ENCODE measurements at regions of chr10 and their contacts with region 1.

Region 1: DNA sequence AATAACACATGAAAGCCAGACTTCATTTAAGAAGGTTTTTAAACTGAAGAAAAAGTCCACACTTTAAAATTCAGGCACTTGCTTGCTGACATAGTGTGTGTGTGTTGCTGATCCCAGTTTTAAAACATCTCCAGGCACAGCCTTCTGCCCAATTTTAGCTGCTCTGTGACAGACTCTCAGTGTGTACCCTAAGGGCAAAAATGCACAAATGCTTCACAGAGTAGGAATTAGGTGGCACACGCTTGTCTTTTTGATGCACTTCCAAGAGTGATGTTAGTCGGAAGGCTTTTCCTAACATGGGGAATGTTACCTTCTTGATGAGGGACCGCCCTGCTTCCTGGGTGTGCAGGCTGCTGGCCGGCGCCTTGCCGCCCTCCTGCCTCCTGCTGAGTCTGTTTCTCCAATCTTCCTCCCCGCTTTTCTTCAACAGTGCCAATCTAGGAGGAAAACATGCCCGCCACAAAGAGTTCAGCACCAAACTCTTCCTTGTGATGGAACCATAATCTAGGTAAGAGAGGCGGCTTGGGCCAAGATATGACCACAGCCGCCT is 122.3 kb downstream of the SVIL start:
- DNase-seq: no peak
- H3K4me3 ChIP-seq: no peak overlapping the region
- H3K4me3 Mint-ChIP-seq: no peak overlapping the region
- H3K27ac ChIP-seq: no peak overlapping the region
- H3K27ac Mint-ChIP-seq: peak overlapping the region in 2 of 7 donors; percentile 28 to 40
- H3K4me1 ChIP-seq: no peaks in the 10 kb centered on the region
- H3K4me1 Mint-ChIP-seq: no peaks in the 10 kb centered on the region
- H3K27me3 ChIP-seq: no peaks in the 10 kb centered on the region
- H3K27me3 Mint-ChIP-seq: peaks cover 0 to 2% (median 0%) of the 10 kb centered on the region in 3 donors
- CTCF ChIP-seq: no peak

Region 2: GRCh38 chr10:29420744-29421143 is 91.8 kb before region 1 on chr10:
- intact Hi-C with region 1: no loop called
- DNase-seq: no peak
- H3K4me3 ChIP-seq: no peak overlapping the region
- H3K4me3 Mint-ChIP-seq: no peak overlapping the region
- H3K27ac ChIP-seq: no peak overlapping the region
- H3K27ac Mint-ChIP-seq: no peak overlapping the region
- H3K4me1 ChIP-seq: no peaks in the 10 kb centered on the region
- H3K4me1 Mint-ChIP-seq: no peaks in the 10 kb centered on the region
- H3K27me3 ChIP-seq: no peaks in the 10 kb centered on the region
- H3K27me3 Mint-ChIP-seq: no peaks in the 10 kb centered on the region
- CTCF ChIP-seq: no peak

Region 3: DNA sequence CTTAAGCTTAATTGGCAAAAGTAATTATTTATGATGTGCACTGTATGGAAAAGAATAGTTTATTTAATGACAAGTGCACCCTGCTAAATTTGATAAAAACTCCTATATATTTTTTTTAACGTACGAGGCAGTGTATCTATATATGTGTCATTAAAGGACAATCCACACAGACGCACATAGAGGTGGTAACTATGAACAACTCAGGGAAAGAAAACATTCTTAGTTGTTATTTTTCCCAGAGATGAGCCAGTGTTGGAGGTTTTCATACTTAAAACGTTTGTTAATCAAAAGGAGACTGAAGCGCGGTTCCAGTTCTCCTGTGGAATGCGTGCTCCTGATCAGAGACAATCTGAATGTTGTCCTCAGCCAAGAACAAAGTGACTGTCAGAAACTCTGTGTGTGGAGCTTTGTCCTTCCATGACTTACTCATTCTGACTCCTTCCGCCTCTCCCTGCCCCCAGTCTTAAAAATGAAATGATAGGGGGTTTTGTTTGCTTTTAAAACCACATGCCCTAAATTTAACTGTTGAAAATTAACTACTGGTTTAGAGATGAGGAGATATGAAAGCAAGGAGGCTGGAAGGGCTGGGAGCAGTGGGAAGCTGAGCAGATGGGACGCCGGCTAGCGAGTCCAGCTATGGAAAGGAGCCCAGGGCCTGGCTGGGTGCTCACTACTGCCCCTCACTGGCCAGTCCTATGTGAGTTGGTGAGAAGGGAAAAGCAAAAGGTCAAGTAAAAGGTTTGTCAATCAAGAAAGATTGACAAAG is 22.7 kb after region 1 on chr10:
- intact Hi-C with region 1: no loop called
- DNase-seq: no peak
- H3K4me3 ChIP-seq: no peak overlapping the region
- H3K4me3 Mint-ChIP-seq: no peak overlapping the region
- H3K27ac ChIP-seq: no peak overlapping the region
- H3K27ac Mint-ChIP-seq: peak overlapping the region in 2 of 7 donors; percentile 6 to 15
- H3K4me1 ChIP-seq: no peaks in the 10 kb centered on the region
- H3K4me1 Mint-ChIP-seq: peaks cover 9% of the 10 kb centered on the region
- H3K27me3 ChIP-seq: no peaks in the 10 kb centered on the region
- H3K27me3 Mint-ChIP-seq: no peaks in the 10 kb centered on the region
- CTCF ChIP-seq: peak; percentile 33

Region 4: DNA sequence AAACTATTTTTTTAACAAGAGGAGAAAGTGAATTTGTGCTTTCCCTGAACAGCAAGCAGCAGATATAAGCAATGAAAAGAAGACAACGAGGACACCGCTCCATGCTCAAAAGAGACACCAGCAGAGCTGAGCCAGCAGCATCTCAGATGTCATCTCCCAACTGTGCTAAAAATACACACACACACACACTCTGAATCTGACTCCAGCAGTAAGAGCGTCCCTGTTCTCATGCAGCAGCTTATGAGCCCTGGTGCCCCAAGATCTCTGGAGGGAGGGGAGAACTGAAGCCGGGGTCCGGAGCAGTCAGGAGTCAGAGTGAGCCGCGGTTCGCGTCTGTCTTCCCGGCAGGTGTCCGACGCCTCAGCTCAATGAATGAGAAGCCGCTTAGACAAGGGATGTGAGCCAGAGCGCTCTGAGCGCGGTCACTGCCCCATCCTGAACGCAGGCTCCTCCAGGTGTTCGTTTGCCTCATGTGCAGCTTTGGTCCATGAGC is 73.0 kb after region 1 on chr10:
- intact Hi-C with region 1: loop called in 1 of 2 experiments (anchors 5 kb)
- DNase-seq: no peak
- H3K4me3 ChIP-seq: no peak overlapping the region
- H3K4me3 Mint-ChIP-seq: no peak overlapping the region
- H3K27ac ChIP-seq: no peak overlapping the region
- H3K27ac Mint-ChIP-seq: peak overlapping the region in 3 of 7 donors; percentile 34 to 61 (median 58)
- H3K4me1 ChIP-seq: peaks cover 25 to 31% of the 10 kb centered on the region in 2 donors
- H3K4me1 Mint-ChIP-seq: peaks cover 39% of the 10 kb centered on the region
- H3K27me3 ChIP-seq: no peaks in the 10 kb centered on the region
- H3K27me3 Mint-ChIP-seq: peaks cover 0 to 3% (median 0%) of the 10 kb centered on the region in 3 donors
- CTCF ChIP-seq: no peak

Measured in CD14-positive monocyte (primary cell).